Activated naive CD4-positive, alpha-beta T cell treated with anti-CD3 and anti-CD28 coated beads for 36 hours (primary cell): ENCODE measurements at regions of chr10 and their contacts with region 1.

Region 1: GRCh38 chr10:29670761-29671160 is 36.0 kb upstream of the SVIL start:
- DNase-seq: no peak
- H3K4me3 Mint-ChIP-seq: no peak overlapping the region
- H3K27ac Mint-ChIP-seq: no peak overlapping the region
- H3K4me1 Mint-ChIP-seq: peaks cover 15% of the 10 kb centered on the region
- H3K27me3 Mint-ChIP-seq: no peaks in the 10 kb centered on the region

Region 2: DNA sequence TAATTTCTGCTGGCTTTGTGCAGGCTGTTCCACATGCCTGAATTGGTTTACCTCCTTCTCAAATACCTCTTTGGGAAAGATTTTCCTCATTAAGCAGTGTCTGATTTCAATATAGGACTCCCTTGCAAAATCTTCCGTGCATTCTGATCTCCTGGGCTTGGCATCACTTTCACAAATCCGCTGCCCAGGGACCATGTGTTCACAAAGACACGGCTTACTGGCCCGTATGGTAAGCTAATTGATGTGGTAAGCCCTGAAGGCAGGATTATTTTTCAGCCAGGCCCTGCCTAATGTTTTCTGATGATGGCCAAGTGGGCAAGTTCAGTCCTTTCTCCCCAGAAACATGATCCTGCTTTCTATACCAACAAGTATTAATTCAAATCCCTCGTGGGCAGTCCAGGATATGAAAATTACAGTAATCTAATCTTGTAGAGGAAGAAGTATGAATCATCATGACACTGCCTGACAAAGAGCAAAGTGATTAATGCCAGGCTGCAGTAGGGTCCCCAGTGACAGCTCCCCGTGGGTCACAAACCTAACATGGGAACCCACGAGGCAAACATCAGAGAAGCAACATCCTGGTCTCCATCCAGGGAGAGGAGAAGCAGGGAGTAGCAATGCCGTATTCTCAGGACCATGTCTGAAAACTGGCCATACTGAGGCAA is 24.4 kb before region 1 on chr10:
- CTCF ChIA-PET with region 1: no interaction called
- intact Hi-C with region 1: loop called (anchors 1 kb)
- DNase-seq: peak; percentile 47
- H3K4me3 Mint-ChIP-seq: no peak overlapping the region
- H3K27ac Mint-ChIP-seq: no peak overlapping the region
- H3K4me1 Mint-ChIP-seq: peaks cover 35% of the 10 kb centered on the region
- H3K27me3 Mint-ChIP-seq: peaks cover 3% of the 10 kb centered on the region

Region 3: GRCh38 chr10:29681676-29682448 is 11.1 kb after region 1 on chr10:
- CTCF ChIA-PET with region 1: no interaction called
- intact Hi-C with region 1: no loop called
- DNase-seq: peak; percentile 71
- H3K4me3 Mint-ChIP-seq: no peak overlapping the region
- H3K27ac Mint-ChIP-seq: no peak overlapping the region
- H3K4me1 Mint-ChIP-seq: peaks cover 69% of the 10 kb centered on the region
- H3K27me3 Mint-ChIP-seq: no peaks in the 10 kb centered on the region